Activated naive CD4-positive, alpha-beta T cell treated with anti-CD3 and anti-CD28 coated beads for 36 hours (primary cell): ENCODE measurements at regions of chr3 and their contacts with region 1.

Region 1: GRCh38 chr3:100400780-100401673 is at the starts of genes LNP1 and TOMM70:
- DNase-seq: peak; percentile 98
- H3K4me3 Mint-ChIP-seq: peak within 1 kb of the TSS; percentile 95
- H3K27ac Mint-ChIP-seq: peak within 1 kb of the TSS; percentile 98
- H3K4me1 Mint-ChIP-seq: peaks cover 59% of the 10 kb centered on the region
- H3K27me3 Mint-ChIP-seq: no peaks in the 10 kb centered on the region
- total RNA-seq, gene LNP1: 2.2 to 2.4 TPM
- total RNA-seq, gene TOMM70: 48.5 to 48.6 TPM

Region 2: DNA sequence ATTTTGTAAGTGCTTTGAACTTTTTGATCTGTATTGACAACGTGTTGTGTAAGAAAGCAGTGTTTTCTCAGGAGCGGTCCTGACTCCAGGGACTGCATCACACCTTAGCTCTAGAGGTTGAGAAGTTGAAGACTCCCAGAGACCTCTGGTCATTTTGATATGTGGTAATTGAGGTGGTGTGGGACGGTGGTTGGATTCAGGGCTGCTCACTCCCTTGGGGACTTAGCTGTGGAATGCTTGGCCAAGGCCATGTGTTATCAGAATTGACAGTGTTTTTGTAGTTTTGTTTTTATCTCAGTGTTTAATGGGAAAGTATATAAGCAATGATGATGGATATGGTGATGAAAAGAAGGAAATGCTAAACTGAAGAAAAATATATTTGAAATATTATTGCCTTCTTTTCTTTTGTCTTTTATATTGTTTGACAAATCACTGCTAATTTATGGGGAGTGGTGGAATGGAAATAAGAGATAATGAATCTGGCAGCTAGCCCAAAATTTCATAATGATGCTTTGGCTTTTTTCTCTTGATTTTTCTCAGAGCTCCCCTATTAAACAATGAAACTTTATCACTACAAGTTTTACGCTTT is 567.3 kb before region 1 on chr3:
- CTCF ChIA-PET with region 1: no interaction called
- intact Hi-C with region 1: loop called (anchors 5 kb)
- DNase-seq: no peak
- H3K4me3 Mint-ChIP-seq: no peak overlapping the region
- H3K27ac Mint-ChIP-seq: no peak overlapping the region
- H3K4me1 Mint-ChIP-seq: peaks cover 12% of the 10 kb centered on the region
- H3K27me3 Mint-ChIP-seq: no peaks in the 10 kb centered on the region

Region 3: DNA sequence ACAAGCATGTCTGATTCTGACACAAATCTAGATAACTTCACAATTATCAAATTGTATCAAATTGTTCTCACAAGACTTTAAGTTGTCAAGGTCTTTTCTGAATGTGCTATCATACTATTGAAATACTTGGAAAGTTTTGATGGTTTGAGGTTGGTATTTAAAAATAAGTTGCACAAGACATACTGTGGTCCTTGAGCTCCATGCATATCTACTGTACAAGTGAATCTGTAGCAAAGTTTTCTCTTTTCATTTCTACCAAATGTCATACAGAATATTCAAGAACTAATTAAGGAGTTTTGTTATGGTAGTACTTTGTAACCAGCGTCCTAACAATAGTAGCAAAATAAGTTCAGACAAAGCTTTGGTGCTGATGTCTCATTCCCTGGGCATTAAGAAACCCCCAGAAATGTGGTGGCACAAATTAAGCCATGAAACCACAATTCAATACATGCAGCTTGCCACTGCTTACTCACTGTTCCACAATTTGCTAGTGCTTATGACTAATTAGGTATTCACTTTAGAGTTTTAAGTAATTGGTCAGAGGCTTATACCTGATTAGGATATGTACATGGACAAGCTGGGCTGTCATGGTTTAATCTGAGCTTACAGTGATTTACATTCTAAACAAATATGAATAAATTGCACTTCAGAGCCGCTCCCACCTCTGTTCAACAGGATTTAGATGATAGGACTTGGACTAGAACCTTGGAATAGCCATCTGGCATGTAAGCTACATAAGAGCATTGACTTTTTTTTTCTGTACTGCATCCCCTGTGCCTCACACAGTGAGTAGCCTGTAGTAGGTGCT is 131.4 kb before region 1 on chr3:
- CTCF ChIA-PET with region 1: no interaction called
- intact Hi-C with region 1: loop called (anchors 2 kb)
- DNase-seq: peak; percentile 43
- H3K4me3 Mint-ChIP-seq: no peak overlapping the region
- H3K27ac Mint-ChIP-seq: peak overlapping the region; percentile 0
- H3K4me1 Mint-ChIP-seq: peaks cover 51% of the 10 kb centered on the region
- H3K27me3 Mint-ChIP-seq: no peaks in the 10 kb centered on the region

Region 4: DNA sequence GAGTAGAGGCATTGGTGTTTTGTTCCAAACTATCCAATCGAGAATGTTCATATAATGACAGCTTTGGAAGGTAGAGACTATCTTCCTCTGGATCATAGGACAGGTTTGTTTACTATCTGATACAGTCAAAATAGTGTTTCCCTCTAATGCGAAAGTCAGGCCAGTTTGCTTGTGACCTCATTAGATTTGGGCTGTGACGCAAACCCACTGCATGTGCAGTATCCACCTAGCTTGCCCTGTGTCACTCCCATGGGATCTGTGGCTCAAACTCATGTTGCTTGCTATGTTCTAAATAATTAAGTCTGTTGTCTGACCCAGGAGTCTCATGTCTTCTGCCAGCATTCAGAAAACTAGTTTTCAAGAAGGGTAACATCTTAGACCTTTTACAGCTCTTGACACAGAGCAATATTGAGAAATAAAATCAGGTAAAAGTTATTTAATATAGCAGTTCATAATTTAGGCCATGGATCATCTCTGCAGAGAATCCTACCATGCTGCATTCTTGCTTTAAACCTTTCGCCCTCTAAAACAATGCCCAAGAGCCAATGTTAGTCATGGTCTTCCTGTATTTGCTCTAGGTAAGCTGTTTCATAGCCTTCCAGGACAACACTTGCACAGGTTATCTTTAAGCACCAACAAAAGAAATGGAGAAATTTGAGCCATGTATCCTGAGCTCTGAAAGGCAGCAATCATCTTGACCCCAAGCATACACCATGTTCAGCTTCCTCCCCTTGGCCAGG is 40.1 kb before region 1 on chr3:
- CTCF ChIA-PET with region 1: no interaction called
- intact Hi-C with region 1: no loop called
- DNase-seq: no peak
- H3K4me3 Mint-ChIP-seq: no peak overlapping the region
- H3K27ac Mint-ChIP-seq: no peak overlapping the region
- H3K4me1 Mint-ChIP-seq: no peaks in the 10 kb centered on the region
- H3K27me3 Mint-ChIP-seq: no peaks in the 10 kb centered on the region

Region 5: DNA sequence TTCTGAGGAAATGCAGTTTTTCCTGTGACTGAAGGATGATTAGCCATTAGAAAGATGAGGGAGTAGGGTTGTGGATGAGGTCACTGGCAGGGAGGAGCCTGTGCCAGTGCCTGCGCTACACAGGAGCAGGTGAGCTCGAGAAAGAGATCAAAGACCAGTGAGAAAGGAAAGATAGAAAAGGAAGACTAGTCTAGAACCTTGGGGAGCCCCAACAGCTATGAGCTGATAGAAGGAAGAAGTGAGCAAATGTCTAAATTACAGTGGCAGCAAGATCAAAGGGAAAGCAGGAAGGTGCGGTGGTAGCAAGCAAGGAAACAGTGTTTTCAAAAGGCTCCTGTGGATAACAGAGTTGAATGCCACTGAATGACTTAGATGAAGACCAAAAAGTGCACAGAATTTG is 39.9 kb after region 1 on chr3:
- CTCF ChIA-PET with region 1: no interaction called
- intact Hi-C with region 1: loop called (anchors 2 kb)
- DNase-seq: peak; percentile 35
- H3K4me3 Mint-ChIP-seq: no peak overlapping the region
- H3K27ac Mint-ChIP-seq: no peak overlapping the region
- H3K4me1 Mint-ChIP-seq: peaks cover 8% of the 10 kb centered on the region
- H3K27me3 Mint-ChIP-seq: no peaks in the 10 kb centered on the region

Region 6: DNA sequence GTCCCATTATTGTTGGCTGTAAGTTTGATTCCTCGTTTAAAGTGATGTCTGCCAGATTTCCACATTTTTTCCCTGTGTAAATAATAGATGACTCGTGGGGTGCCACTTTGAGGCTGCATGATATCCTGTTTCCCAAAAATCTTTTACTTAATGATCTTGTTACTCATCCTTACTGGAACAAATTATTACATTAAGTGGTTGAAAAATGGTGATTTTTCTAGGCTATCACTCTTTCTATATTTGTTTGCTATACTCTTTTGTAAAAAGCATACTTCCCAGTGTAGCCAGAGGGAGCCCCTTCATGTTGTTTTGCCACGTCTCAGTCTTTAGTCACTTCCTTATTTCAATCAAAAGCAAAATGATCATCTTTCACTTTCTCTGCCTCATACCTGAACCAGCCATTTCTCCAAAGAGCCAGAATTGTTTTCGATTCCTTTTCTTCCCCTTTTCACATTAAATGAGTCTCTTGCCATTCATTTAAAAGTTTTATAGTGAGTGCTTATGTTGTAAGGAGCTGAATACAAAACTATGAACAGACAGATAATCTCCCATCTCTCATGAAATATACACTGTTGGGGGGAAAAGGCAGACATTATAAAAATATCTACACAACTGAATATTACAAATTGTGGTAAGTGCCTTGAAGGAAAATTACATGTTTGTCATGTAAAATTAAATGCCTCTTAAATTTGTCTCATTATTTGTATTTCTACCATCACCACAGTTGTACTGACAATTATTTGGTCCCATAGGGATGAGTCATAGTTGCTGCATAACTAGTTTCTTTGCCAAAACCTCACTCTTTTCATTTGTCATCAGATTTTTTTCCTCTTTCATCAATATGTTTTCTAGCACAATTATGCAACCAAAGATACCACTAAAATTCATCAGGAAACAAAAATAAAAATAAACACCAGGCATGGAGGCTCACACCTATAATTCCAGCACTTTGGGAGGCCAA is 249.9 kb after region 1 on chr3:
- CTCF ChIA-PET with region 1: no interaction called
- intact Hi-C with region 1: loop called (anchors 1 kb)
- DNase-seq: peak; percentile 57
- H3K4me3 Mint-ChIP-seq: peak overlapping the region; percentile 30
- H3K27ac Mint-ChIP-seq: peak overlapping the region; percentile 84
- H3K4me1 Mint-ChIP-seq: peaks cover 16% of the 10 kb centered on the region
- H3K27me3 Mint-ChIP-seq: no peaks in the 10 kb centered on the region

Region 7: DNA sequence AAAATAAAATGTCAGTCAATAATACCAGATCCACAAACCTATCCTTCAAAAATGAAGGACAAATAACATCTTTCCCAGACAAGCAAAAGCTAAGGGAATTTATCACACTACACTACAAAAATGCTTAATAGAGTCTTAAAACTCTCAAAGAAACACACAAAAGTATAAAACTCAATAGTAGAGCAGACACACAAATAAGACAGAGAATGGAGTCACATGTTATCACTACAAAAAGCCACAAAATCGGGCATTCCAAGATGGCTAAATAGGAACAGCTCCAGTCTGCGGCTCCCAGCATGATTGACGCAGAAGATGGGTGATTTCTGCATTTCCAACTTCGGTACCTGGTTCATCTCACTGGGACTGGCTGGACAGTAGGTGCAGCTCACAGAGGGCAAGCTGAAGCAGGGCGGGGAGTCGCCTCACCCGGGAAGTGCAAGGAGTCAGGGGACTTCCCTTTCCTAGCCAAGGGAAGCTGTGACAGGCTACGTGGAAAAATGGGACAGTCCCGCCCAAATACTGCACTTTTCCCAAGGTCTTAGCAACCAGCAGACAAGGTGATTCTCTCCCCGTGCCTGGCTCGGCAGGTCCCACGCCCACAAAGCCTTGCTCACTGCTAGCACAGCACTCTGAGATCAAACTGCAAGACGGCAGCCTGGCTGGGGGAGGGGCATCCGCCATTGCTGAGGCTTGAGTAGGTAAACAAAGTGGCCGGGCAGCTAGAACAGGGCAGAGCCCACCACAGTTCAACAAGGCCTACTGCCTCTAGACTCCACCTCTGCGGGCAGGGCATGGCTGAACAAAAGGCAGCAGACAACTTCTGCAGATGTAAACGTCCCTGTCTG is 1065.7 kb after region 1 on chr3:
- CTCF ChIA-PET with region 1: no interaction called
- intact Hi-C with region 1: loop called (anchors 5 kb)
- DNase-seq: peak; percentile 90
- H3K4me3 Mint-ChIP-seq: peak overlapping the region; percentile 71
- H3K27ac Mint-ChIP-seq: peak overlapping the region; percentile 88
- H3K4me1 Mint-ChIP-seq: peaks cover 57% of the 10 kb centered on the region
- H3K27me3 Mint-ChIP-seq: no peaks in the 10 kb centered on the region